Heart left ventricle (tissue), 16 donors: ENCODE measurements at regions of chr2 and their contacts with region 1.

Region 1: GRCh38 chr2:100845141-100845991 is 25.4 kb downstream of the NPAS2 start:
- DNase-seq: peak; percentile 77 to 89 (median 81)
- ATAC-seq: peak; percentile 93 to 98 (median 96)
- H3K4me3 ChIP-seq: no peak overlapping the region
- H3K27ac ChIP-seq: peak overlapping the region in 11 of 12 donors; percentile 30 to 82 (median 65)
- H3K4me1 ChIP-seq: peaks cover 0 to 55% (median 18%) of the 10 kb centered on the region in 12 donors
- H3K27me3 ChIP-seq: no peaks in the 10 kb centered on the region
- CTCF ChIP-seq: no peak
- POLR2A ChIP-seq: no peak

Region 2: GRCh38 chr2:101223814-101224231 is 378.5 kb after region 1 on chr2:
- intact Hi-C with region 1: loop called in 1 of 10 experiments (anchors 10 kb)
- DNase-seq: no peak
- ATAC-seq: peak in 1 of 4 donors; percentile 44
- H3K4me3 ChIP-seq: no peak overlapping the region
- H3K27ac ChIP-seq: no peak overlapping the region
- H3K4me1 ChIP-seq: peaks cover 0 to 6% (median 0%) of the 10 kb centered on the region in 12 donors
- H3K27me3 ChIP-seq: no peaks in the 10 kb centered on the region
- CTCF ChIP-seq: no peak
- POLR2A ChIP-seq: no peak